Activated T-helper 1 cell treated with anti-CD3 and anti-CD28 coated beads, Interleukin-12 subunit alpha, Interleukin-12 subunit beta, Interleukin-2, Interleukin-4 antibody, amounts not matched to agents 30 ng/mL and 10 ng/mL and 1 ng/mL, durations not matched to agents 14 hours and 24 hours and 36 hours (primary cell): ENCODE measurements at regions of chr6 and their contacts with region 1.

Region 1: GRCh38 chr6:2634139-2634964 is 116.4 kb downstream of the MYLK4 start:
- DNase-seq: peak; percentile 70
- H3K4me3 Mint-ChIP-seq: peak overlapping the region; percentile 61
- H3K27ac Mint-ChIP-seq: no peak overlapping the region
- H3K4me1 Mint-ChIP-seq: no peaks in the 10 kb centered on the region
- H3K27me3 Mint-ChIP-seq: peaks cover 29% of the 10 kb centered on the region

Region 2: DNA sequence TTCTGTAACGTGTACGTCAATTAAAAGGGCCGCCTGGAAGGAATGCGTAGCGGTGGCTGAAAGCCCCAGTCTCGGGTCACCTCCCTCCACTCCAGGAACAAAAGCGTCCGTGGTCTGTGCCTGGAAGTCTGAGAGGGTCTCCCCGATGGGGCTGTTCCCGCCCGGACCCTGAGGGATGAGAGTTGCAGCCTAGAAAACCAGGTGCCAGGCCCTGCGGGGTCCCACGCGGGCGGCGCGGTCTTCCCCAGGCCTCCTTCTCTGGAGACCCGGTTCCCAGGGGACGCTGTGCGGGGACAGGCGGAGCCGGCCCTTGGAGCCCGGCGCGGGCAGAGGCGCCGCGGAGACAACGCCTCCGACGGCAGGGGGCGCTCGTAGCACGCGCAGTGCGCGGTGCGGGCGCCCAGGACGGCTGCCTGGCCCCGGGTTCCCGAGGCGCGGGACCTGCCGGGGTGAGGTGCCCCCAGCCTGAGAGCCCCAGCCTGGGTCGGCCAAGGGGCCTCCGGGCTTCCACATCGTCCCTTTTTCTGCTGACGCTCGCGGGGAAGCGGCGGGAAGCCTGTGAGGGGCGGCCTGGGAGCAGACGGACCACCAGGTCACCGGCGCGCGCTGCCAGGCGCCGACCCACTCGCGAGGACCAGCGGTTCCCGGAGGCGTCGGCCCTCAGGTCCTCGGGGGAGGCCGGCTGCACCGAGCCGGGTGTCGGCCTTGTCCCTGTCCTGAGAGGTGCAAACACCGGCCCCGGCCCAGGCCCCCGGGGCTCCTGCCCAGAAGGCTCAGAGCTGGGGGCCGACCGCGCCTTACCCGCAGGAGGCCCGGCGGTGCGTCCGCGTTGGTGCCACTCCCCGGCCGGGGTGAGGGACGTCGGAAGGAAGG is 1030.0 kb before region 1 on chr6:
- intact Hi-C with region 1: loop called (anchors 1 kb)
- DNase-seq: peak; percentile 37
- H3K4me3 Mint-ChIP-seq: no peak overlapping the region
- H3K27ac Mint-ChIP-seq: no peak overlapping the region
- H3K4me1 Mint-ChIP-seq: peaks cover 13% of the 10 kb centered on the region
- H3K27me3 Mint-ChIP-seq: peaks cover 84% of the 10 kb centered on the region

Region 3: DNA sequence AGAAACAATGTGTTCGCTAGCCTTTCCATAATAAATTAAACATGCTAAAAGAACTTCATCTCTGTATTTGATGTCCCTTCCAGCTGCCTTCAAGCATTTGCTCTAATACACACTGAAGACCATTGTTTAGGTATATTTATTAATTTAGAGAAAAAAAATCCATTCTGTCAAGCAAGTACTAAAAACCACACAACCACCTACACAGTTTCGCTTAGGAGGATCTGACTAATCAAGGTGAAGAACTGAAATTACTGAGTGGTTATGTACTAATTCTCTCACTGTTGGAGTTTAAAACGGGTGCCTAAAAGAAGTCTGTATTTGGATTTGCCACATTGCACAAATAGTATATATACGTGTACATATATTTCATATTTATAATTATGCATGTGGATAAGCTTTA is 447.8 kb before region 1 on chr6:
- intact Hi-C with region 1: loop called (anchors 5 kb)
- DNase-seq: no peak
- H3K4me3 Mint-ChIP-seq: no peak overlapping the region
- H3K27ac Mint-ChIP-seq: peak overlapping the region; percentile 65
- H3K4me1 Mint-ChIP-seq: peaks cover 20% of the 10 kb centered on the region
- H3K27me3 Mint-ChIP-seq: peaks cover 6% of the 10 kb centered on the region

Region 4: GRCh38 chr6:2353412-2354137 is 280.8 kb before region 1 on chr6:
- intact Hi-C with region 1: loop called (anchors 2 kb)
- DNase-seq: peak; percentile 7
- H3K4me3 Mint-ChIP-seq: no peak overlapping the region
- H3K27ac Mint-ChIP-seq: no peak overlapping the region
- H3K4me1 Mint-ChIP-seq: no peaks in the 10 kb centered on the region
- H3K27me3 Mint-ChIP-seq: peaks cover 2% of the 10 kb centered on the region

Region 5: GRCh38 chr6:2542858-2543218 is 91.5 kb before region 1 on chr6:
- intact Hi-C with region 1: loop called (anchors 5 kb)
- DNase-seq: peak; percentile 78
- H3K4me3 Mint-ChIP-seq: peak overlapping the region; percentile 41
- H3K27ac Mint-ChIP-seq: peak overlapping the region; percentile 74
- H3K4me1 Mint-ChIP-seq: peaks cover 39% of the 10 kb centered on the region
- H3K27me3 Mint-ChIP-seq: peaks cover 66% of the 10 kb centered on the region